ENCODE measurements at regions of chr22 and their contacts with region 1.

Region 1: DNA sequence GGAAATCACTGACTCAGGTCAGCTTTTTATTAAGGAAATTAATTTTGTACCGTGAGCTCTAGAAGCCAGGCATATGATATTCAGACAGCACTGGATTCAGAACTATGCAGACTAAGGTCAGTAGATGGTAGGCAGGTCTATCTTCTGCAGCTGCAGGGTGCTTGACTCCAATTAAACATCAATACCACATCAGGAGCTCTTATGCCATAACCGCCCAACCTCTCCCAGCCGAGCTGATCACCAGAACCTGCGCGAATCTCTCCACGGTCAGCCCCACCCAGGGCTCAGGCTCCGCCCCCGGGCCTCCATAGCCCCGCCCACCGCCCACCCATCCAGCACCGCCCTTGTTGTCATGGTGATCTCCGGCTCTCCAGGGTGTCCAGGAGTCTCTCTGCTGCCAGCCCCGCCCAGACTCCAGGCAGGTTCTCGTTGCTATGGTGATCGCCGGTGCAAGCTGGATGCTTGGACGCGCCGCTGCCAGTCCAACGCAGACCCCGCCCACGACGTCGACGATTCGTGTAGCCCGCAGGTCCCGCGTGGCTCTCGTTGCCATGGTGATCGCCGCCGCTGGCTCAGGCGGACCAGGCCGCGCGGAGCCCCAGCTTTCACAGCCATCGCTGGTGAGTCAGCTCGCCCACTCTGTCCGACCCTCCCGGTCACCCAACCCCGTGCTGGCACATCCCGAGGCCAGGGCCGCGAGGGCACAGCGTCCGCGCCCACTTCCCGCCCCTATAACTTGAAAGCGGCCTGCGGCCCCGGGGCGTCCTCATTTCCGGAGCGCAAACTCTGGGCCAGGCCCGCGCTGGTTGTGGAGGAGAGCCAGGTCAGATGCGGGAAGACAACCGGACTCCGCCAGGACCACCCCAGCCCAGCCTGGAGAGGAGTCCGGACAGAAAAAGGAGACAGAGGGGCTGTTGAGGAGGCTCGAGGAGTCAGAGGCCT is at the start of gene RAB36:
- DNase-seq: peak; percentile 60 to 100 (median 100)
- ATAC-seq: peak; percentile 90
- H3K4me3 ChIP-seq: no peak within 1 kb of the TSS
- H3K27ac ChIP-seq: no peak within 1 kb of the TSS
- H3K4me1 ChIP-seq: peaks cover 16 to 30% of the 10 kb centered on the region in 2 experiments
- H3K27me3 ChIP-seq: peaks cover 31 to 42% of the 10 kb centered on the region in 2 experiments
- CTCF ChIP-seq: no peak
- EP300 ChIP-seq: no peak
- POLR2A ChIP-seq: no peak
- RAD21 ChIP-seq: no peak
- polyA plus RNA-seq, gene RAB36: 0.04 to 0.08 TPM

Region 2: GRCh38 chr22:23119494-23120414 is 25.4 kb before region 1 on chr22:
- CTCF ChIA-PET with region 1: no interaction called
- POLR2A ChIA-PET with region 1: interaction called, 31 read pairs
- in situ Hi-C with region 1: no loop called
- intact Hi-C with region 1: no loop called
- DNase-seq: peak in 2 of 4 experiments; percentile 66 to 80
- ATAC-seq: peak; percentile 65
- H3K4me3 ChIP-seq: no peak overlapping the region
- H3K27ac ChIP-seq: no peak overlapping the region
- H3K4me1 ChIP-seq: peaks cover 9 to 29% of the 10 kb centered on the region in 2 experiments; a peak in 4 of 5 replicates
- H3K27me3 ChIP-seq: peaks cover 50 to 95% of the 10 kb centered on the region in 2 experiments
- CTCF ChIP-seq: peak in 2 of 3 experiments; percentile 32 to 46; a peak in 3 of 6 replicates
- EP300 ChIP-seq: no peak
- POLR2A ChIP-seq: no peak
- RAD21 ChIP-seq: peak in 1 of 2 experiments; percentile 27; a peak in 2 of 4 replicates

Region 3: GRCh38 chr22:23289851-23290724 is 144.9 kb after region 1 on chr22:
- CTCF ChIA-PET with region 1: no interaction called
- POLR2A ChIA-PET with region 1: interaction called, 10 read pairs
- in situ Hi-C with region 1: no loop called
- intact Hi-C with region 1: no loop called
- DNase-seq: peak; percentile 81 to 92 (median 88)
- ATAC-seq: peak; percentile 88
- H3K4me3 ChIP-seq: no peak overlapping the region
- H3K27ac ChIP-seq: no peak overlapping the region
- H3K4me1 ChIP-seq: peaks cover 0 to 15% of the 10 kb centered on the region in 2 experiments; a peak in 1 of 5 replicates
- H3K27me3 ChIP-seq: no peaks in the 10 kb centered on the region
- CTCF ChIP-seq: peak in 2 of 3 experiments; percentile 82 to 89; a peak in 4 of 6 replicates
- EP300 ChIP-seq: no peak
- POLR2A ChIP-seq: no peak
- RAD21 ChIP-seq: peak in 1 of 2 experiments; percentile 81; a peak in 2 of 4 replicates

Measured in K562 (cell line).